Common myeloid progenitor, CD34-positive (primary cell): ENCODE measurements at regions of chr2 and their contacts with region 1.

Region 1: DNA sequence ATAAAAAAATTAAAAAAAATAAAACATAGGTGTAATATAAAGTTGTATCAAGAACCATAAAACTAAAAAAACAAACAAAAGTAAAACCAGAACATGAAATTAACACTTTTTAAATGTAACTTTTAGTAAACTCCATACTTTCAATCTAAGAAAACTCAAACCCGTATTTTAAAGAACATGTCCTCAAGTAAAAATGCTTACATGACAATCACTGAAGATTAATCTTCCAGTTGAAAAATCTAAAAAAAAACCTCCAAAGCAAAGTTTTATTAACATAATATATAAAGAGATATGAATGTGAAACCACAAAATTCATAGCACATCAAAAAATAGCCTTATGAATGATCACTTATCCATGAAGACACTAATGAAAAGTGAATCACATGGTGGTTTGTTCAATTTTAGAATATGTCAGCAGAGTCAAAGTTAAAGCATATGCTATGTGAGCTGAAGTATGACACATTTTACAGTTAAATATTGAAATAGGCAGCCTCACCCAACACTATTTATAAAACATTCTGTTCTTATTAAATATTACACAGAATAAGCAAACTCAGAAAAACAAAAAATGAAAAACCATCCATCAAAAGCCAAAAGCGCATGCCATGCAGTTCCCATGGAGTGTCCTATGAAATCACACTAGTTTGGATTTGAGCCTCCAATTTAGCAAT is 23.1 kb upstream of the CHAC2 start:
- DNase-seq: no peak
- H3K4me3 ChIP-seq: no peak overlapping the region
- H3K27ac ChIP-seq: no peak overlapping the region
- H3K4me1 ChIP-seq: no peaks in the 10 kb centered on the region
- H3K27me3 ChIP-seq: no peaks in the 10 kb centered on the region

Region 2: DNA sequence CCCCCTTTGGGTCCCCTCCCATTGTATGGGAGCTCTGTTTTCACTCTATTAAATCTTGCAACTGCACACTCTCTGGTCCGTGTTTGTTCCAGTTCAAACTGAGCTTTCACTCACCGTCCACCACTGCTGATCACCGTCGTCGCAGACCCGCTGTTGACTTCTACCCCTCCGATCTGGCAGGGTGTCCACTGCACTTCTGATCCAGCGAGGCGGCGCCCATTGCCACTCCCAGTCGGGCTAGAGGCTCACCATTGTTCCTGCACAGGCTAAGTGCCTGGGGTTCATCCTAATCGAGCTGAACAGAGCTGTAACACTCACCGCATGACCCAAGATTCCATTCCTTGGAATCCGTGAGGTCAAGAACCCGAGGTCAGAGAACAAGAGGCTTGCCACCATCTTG is 12.1 kb after region 1 on chr2:
- CTCF ChIA-PET with region 1: interaction called, 10 read pairs
- POLR2A ChIA-PET with region 1: no interaction called
- DNase-seq: no peak
- H3K4me3 ChIP-seq: no peak overlapping the region
- H3K27ac ChIP-seq: no peak overlapping the region
- H3K4me1 ChIP-seq: no peaks in the 10 kb centered on the region
- H3K27me3 ChIP-seq: no peaks in the 10 kb centered on the region